Calu3 (cell line): ENCODE measurements at regions of chr3 and their contacts with region 1.

Region 1: DNA sequence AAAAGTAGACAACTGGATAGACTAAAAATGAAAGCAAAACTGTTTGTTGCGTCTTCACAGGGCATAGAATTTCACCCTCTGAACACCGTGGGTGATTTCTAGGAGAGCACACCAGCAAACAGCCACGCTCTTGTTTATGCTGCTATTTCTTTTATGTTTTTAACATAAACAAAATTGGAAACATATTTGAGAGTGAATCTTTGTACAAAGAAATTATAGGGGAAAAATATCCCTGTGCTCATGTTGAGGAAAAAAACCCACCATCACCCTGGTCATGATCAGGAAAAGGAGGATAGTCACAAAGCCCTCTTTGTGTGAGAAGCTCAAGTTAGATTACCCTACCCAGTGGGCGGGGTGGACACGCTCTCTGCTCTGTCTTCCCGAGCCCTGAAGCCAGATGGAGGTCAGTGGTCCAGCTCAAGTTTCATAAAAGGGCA is 313.3 kb downstream of the SATB1 start:
- DNase-seq: peak; percentile 65
- H3K4me3 Mint-ChIP-seq: peak overlapping the region; percentile 32
- H3K27ac Mint-ChIP-seq: peak overlapping the region; percentile 64
- H3K4me1 Mint-ChIP-seq: no peaks in the 10 kb centered on the region
- H3K27me3 Mint-ChIP-seq: no peaks in the 10 kb centered on the region
- CTCF ChIP-seq: no peak

Region 2: DNA sequence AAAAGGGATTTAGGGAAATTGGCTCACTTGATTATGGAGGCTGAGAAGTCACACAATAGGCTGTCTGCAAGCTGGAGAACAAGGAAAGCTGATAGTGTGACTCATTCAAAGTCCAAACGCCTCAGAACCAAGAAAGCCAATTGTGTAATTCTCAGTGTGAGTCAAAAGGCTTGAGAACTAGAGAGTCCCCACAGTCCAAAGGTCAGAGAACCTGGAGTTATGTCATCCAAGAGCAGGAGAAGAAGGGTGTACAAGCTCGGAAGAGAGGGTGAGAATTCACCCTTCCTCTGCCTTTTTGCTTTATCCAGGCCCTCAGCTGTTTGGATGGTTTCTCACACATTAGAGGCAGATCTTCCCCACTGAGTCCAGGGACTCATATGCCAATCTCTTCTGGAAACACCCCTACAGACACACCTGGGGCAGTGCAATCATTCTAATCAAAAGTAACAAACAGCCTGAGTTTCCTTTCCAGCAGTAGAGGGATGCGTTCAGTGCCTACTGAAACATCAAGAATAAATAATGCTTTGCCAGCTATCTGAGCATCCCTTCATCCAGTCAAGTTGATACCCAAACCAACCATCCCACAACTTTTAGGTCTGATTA is 41.9 kb after region 1 on chr3:
- CTCF ChIA-PET with region 1: no interaction called
- intact Hi-C with region 1: loop called (anchors 5 kb)
- DNase-seq: peak; percentile 56
- H3K4me3 Mint-ChIP-seq: peak overlapping the region; percentile 5
- H3K27ac Mint-ChIP-seq: peak overlapping the region; percentile 19
- H3K4me1 Mint-ChIP-seq: peaks cover 23% of the 10 kb centered on the region
- H3K27me3 Mint-ChIP-seq: no peaks in the 10 kb centered on the region
- CTCF ChIP-seq: no peak